ENCODE measurements at regions of chr2 and their contacts with region 1.

Region 1: DNA sequence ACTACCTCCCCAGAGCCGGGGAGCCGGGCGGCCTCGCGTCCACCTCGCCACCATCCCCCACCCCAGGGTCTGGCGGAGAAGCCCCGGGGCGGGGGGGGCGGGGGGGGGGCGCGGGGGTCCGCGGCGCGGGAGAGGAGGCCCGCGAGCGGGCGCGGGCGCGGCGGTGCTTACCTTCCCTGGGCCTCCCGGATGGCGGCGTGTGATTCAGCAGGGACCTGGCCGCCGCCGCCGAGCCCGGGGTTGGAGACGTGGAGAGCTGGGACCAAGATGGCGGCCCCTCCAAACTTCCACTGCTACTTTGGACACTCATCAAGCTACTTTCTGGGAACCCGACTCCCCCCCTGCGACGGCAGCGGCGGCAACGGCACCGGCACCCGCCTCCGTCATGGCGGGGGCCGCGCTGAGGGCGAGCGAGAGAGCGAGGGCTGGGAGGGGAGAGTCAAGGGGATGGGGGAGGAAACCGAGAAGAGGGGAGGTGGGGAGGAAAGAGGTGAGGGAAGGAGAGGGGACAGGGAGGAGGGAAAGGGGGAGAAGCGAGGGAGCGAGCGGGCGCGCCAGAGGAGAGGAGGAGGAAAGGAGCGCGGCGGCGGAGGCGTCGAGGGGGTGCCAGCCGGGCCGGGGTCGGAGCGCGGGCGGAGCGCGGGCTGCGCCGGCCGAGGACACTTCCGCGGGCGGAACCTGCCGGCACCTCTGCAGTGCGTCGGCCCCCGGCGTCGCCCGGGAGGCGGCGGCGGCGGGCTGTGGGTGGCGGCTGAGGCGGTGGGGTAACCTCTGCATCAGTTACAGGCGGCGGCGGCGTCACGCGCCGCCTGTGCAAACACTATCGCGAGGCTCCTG is at the start of gene TLK1:
- DNase-seq: peak; percentile 94
- H3K4me3 ChIP-seq: peak within 1 kb of the TSS; percentile 73 to 94 (median 90)
- H3K27ac ChIP-seq: peak within 1 kb of the TSS; percentile 95 to 98 (median 96)
- H3K4me1 ChIP-seq: peaks cover 9 to 45% (median 41%) of the 10 kb centered on the region in 4 donors
- H3K27me3 ChIP-seq: no peaks in the 10 kb centered on the region
- CTCF ChIP-seq: no peak
- EP300 ChIP-seq: no peak
- POLR2A ChIP-seq: no peak
- total RNA-seq, gene TLK1: 27.9 to 46.1 (median 34.0) TPM

Region 2: DNA sequence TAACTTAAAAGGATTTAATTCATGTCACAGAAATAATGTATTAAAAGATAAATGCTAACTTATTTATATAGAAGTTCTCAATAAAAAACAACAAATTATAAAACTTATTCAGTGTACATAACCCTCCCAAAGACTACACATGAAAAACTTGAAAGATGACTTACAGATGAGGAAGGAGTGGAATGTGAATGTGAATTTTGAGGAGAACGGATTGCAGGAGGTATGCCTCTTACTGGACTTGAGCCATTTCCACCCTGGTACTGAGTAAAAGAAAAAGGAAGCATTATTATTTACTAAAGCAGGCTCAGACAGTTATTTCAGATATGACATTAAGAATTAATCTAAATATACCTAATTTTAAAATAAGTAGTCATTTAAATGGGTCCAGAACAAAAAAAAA is 104.0 kb before region 1 on chr2:
- intact Hi-C with region 1: loop called (anchors 10 kb)
- DNase-seq: no peak
- H3K4me3 ChIP-seq: no peak overlapping the region
- H3K27ac ChIP-seq: no peak overlapping the region
- H3K4me1 ChIP-seq: peaks cover 0 to 12% (median 5%) of the 10 kb centered on the region in 4 donors
- H3K27me3 ChIP-seq: no peaks in the 10 kb centered on the region
- CTCF ChIP-seq: no peak
- EP300 ChIP-seq: no peak
- POLR2A ChIP-seq: no peak

Region 3: DNA sequence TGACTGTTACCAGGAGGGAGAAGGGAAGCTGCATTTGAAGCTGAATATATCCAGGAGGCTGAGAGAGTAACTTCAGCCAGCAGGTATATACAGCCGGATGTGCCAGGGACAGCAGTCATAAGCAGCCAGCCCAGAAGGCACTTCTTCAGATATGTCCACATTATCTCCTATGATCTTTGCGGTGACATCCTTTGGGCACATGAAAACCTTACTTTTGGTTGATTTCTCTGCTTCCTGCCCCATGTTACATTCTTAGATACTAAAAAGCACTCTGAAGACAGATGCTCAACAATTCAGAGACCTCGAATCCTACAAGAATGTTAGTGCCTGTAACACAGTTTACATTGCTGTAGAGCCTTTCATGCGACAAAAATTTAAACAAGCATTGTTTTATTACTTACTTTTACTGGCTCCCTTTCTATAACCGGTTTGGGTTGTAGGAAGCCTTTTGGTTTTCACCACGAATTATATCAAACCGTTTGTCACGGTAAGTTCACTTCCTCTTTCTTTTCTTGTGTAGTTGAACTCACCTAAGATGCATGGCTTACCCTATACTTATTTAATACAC is 50.6 kb after region 1 on chr2:
- intact Hi-C with region 1: no loop called
- DNase-seq: no peak
- H3K4me3 ChIP-seq: peak overlapping the region in 2 of 4 donors; percentile 14 to 16
- H3K27ac ChIP-seq: peak overlapping the region in 1 of 4 donors; percentile 40
- H3K4me1 ChIP-seq: peaks cover 0 to 10% (median 0%) of the 10 kb centered on the region in 4 donors
- H3K27me3 ChIP-seq: no peaks in the 10 kb centered on the region
- CTCF ChIP-seq: no peak
- EP300 ChIP-seq: no peak
- POLR2A ChIP-seq: no peak

Region 4: DNA sequence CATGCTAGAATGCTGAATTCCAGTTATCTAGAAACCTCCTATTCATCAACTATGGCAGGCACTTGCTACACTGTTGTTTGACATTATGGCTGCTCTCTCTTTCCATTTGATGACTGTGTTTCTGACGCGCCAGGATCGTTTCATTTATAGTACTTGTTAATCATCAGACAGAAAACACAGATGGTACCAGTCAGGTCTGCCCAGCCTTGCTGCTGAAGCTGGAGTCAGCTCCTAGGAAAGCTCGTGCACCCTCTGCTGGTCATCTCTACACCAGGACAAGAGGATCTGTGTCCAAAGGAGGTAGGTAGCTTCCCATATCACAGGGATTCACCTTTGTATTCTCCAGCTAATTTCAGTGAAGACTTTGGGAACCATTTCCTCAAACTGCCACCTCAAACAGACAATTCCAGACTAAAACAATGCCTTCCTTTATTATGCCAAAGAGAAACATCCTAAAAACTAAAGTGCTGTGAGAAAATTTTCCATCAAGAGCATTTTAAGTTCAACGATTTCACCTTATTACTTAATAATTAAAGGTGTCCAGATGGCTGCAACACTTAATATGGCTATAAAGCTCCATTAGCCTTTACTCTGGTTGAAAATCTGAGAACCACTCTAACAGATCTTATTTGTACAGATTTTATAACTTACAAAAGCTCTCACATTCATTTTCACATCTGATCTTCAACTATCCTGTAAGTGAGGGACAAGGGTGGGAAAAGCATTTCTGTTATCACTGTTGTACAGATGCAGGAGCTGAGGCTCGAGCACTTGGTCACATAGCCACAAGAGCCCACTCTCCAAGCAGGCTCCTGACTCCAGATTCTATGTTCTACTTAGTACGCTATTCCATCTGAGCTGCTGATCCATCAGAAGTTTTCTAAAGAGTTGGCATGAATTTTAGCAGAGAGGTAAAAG is 255.9 kb after region 1 on chr2:
- intact Hi-C with region 1: loop called (anchors 5 kb)
- DNase-seq: peak; percentile 93
- H3K4me3 ChIP-seq: peak overlapping the region in 1 of 4 donors; percentile 10
- H3K27ac ChIP-seq: peak overlapping the region; percentile 56 to 72 (median 63)
- H3K4me1 ChIP-seq: peaks cover 4 to 30% (median 20%) of the 10 kb centered on the region in 4 donors
- H3K27me3 ChIP-seq: no peaks in the 10 kb centered on the region
- CTCF ChIP-seq: peak; percentile 82 to 90 (median 86)
- EP300 ChIP-seq: no peak
- POLR2A ChIP-seq: no peak

Region 5: DNA sequence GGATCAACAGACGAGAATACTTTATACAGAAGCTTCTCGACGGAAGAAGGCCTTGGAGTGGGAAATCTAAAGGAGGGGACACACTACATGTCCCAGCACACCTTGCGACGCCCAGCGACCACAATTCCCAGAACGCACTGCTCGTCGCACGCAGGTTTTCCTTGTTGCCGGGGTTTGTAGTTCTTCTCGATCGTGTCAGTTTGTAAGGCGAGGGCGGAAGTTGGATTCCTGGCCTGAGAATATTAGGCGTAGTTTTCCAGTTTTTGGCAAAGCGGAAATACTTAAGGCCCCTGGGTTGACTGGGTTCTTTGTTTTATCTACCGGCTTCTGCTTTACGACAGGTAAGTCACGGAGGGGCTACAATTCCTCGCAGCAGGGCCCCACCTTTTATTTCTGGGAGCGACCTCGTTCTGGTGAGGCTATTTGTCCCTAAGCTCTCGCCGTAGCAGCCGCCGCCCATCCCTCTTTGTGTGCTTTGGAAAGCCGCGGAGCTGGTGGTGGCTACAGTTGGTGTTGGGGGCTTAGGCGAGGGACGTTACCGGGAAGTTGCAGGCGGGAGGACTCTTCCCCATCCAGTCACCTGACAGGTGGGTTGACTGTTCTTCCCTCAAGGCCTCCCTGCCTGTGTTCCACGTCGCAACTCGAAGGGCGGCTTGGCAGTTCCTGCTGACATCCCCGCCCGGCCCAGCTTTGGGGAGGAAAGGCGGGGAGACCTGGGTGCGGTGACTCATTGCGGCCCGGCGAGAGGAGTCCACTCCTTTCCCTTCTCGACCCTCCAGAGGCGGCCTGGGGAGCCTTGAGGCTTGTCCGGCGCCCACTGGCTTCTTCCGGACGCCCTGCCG is 527.2 kb after region 1 on chr2 and contains the start of gene DYNC1I2:
- intact Hi-C with region 1: no loop called
- DNase-seq: peak; percentile 97
- H3K4me3 ChIP-seq: peak within 1 kb of the TSS; percentile 74 to 94 (median 87)
- H3K27ac ChIP-seq: peak within 1 kb of the TSS; percentile 76 to 87 (median 85)
- H3K4me1 ChIP-seq: peaks cover 15 to 28% (median 25%) of the 10 kb centered on the region in 4 donors
- H3K27me3 ChIP-seq: no peaks in the 10 kb centered on the region
- CTCF ChIP-seq: peak in 1 of 3 experiments; percentile 9
- EP300 ChIP-seq: no peak
- POLR2A ChIP-seq: no peak
- total RNA-seq, gene DYNC1I2: 99.1 to 122 (median 112) TPM

Measured in esophagus muscularis mucosa (tissue), 4 donors.